Caco-2 (cell line): ENCODE measurements at regions of chr4 and their contacts with region 1.

Region 1: DNA sequence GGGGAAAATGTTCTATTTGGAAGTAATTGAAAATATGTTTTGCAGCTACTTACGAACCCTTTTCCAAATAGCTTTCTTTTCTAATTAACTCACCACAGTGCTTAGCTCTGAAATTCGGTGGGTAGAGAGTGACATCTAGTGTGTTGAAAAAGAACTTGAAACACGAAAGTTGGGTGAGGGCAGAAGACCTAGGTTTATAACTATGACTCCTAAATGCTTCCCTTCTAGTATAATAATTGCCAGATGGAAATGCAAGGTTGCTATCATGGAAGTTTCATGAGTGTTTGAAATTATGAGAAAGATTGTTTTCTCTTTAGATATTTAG is 77.3 kb upstream of the NOCT start:
- DNase-seq: peak in 1 of 2 experiments; percentile 44
- H3K4me3 ChIP-seq: no peak overlapping the region
- H3K4me3 Mint-ChIP-seq: no peak overlapping the region
- H3K27ac Mint-ChIP-seq: peak overlapping the region; percentile 32
- H3K4me1 ChIP-seq: peaks cover 56% of the 10 kb centered on the region
- H3K4me1 Mint-ChIP-seq: peaks cover 37% of the 10 kb centered on the region
- H3K27me3 ChIP-seq: no peaks in the 10 kb centered on the region
- H3K27me3 Mint-ChIP-seq: no peaks in the 10 kb centered on the region
- CTCF ChIP-seq: peak in 1 of 2 experiments; percentile 50

Region 2: GRCh38 chr4:137819964-137820383 is 1118.4 kb before region 1 on chr4:
- CTCF ChIA-PET with region 1: interaction called, 5 read pairs
- POLR2A ChIA-PET with region 1: no interaction called
- intact Hi-C with region 1: loop called (anchors 10 kb)
- DNase-seq: peak; percentile 46 to 58
- H3K4me3 ChIP-seq: no peak overlapping the region
- H3K4me3 Mint-ChIP-seq: no peak overlapping the region
- H3K27ac Mint-ChIP-seq: no peak overlapping the region
- H3K4me1 ChIP-seq: no peaks in the 10 kb centered on the region
- H3K4me1 Mint-ChIP-seq: no peaks in the 10 kb centered on the region
- H3K27me3 ChIP-seq: no peaks in the 10 kb centered on the region
- H3K27me3 Mint-ChIP-seq: no peaks in the 10 kb centered on the region
- CTCF ChIP-seq: peak; percentile 64 to 76

Region 3: DNA sequence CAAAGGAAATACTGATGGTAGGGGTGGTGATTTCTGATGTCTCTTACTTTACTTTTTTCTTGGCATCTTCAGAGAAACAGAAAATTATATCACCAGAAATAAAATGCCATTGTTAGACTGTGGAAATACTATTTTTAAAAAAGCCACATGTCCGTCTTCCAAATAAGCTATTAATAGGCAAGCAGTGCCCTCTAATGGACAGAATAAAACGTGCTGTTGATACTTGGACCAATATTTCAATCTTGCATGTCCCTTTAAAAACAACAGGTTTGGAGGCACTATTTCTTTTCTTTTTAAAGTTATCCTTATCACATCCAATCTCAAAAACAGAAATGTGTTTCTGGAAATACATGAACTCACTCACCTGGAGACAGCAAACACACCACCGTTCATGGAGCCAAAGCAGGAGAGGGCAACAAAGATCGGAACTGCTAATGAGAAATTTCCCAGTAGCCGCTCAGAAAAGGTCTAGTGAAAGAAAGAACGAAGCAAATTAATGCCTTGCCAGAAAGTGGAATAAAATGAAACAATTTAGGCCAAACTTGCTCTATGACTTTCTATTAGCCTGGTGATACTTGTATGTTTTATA is 755.4 kb before region 1 on chr4:
- CTCF ChIA-PET with region 1: interaction called, 3 read pairs
- POLR2A ChIA-PET with region 1: no interaction called
- intact Hi-C with region 1: loop called (anchors 5 kb)
- DNase-seq: peak in 1 of 2 experiments; percentile 45
- H3K4me3 ChIP-seq: no peak overlapping the region
- H3K4me3 Mint-ChIP-seq: no peak overlapping the region
- H3K27ac Mint-ChIP-seq: no peak overlapping the region
- H3K4me1 ChIP-seq: no peaks in the 10 kb centered on the region
- H3K4me1 Mint-ChIP-seq: no peaks in the 10 kb centered on the region
- H3K27me3 ChIP-seq: no peaks in the 10 kb centered on the region
- H3K27me3 Mint-ChIP-seq: no peaks in the 10 kb centered on the region
- CTCF ChIP-seq: peak; percentile 50 to 60

Region 4: GRCh38 chr4:138576684-138577083 is 361.6 kb before region 1 on chr4:
- CTCF ChIA-PET with region 1: interaction called, 29 read pairs
- POLR2A ChIA-PET with region 1: no interaction called
- intact Hi-C with region 1: loop called (anchors 1 kb)
- DNase-seq: peak in 1 of 2 experiments; percentile 33
- H3K4me3 ChIP-seq: no peak overlapping the region
- H3K4me3 Mint-ChIP-seq: no peak overlapping the region
- H3K27ac Mint-ChIP-seq: no peak overlapping the region
- H3K4me1 ChIP-seq: no peaks in the 10 kb centered on the region
- H3K4me1 Mint-ChIP-seq: no peaks in the 10 kb centered on the region
- H3K27me3 ChIP-seq: no peaks in the 10 kb centered on the region
- H3K27me3 Mint-ChIP-seq: no peaks in the 10 kb centered on the region
- CTCF ChIP-seq: peak; percentile 47 to 63

Region 5: GRCh38 chr4:138870737-138871554 is 67.4 kb before region 1 on chr4:
- CTCF ChIA-PET with region 1: interaction called, 39 read pairs
- POLR2A ChIA-PET with region 1: no interaction called
- intact Hi-C with region 1: loop called (anchors 1 kb)
- DNase-seq: peak; percentile 62 to 78
- H3K4me3 ChIP-seq: no peak overlapping the region
- H3K4me3 Mint-ChIP-seq: no peak overlapping the region
- H3K27ac Mint-ChIP-seq: no peak overlapping the region
- H3K4me1 ChIP-seq: peaks cover 11% of the 10 kb centered on the region
- H3K4me1 Mint-ChIP-seq: peaks cover 7% of the 10 kb centered on the region
- H3K27me3 ChIP-seq: no peaks in the 10 kb centered on the region
- H3K27me3 Mint-ChIP-seq: no peaks in the 10 kb centered on the region
- CTCF ChIP-seq: peak; percentile 70 to 80

Region 6: DNA sequence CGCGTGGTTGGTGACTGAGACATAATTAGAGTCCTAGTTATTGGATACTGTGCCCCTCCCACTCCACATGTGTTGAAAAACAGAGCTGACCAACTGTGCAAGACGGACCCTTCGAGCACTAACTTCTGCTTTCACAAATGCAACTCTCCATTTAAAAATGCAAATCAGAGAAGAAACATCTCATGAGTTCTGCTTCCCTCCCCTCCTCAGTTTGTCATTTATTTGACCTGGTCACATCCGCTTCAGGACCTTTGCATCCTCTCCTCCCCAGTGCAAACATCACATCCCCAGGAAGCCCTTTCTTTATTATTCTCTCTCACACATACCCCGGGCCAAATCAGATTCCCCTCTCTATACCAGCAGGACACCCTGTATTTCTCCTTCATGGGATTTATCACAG is 39.2 kb after region 1 on chr4:
- CTCF ChIA-PET with region 1: interaction called, 5 read pairs
- POLR2A ChIA-PET with region 1: no interaction called
- intact Hi-C with region 1: loop called (anchors 2 kb)
- DNase-seq: no peak
- H3K4me3 ChIP-seq: no peak overlapping the region
- H3K4me3 Mint-ChIP-seq: peak overlapping the region; percentile 25
- H3K27ac Mint-ChIP-seq: peak overlapping the region; percentile 78
- H3K4me1 ChIP-seq: peaks cover 55% of the 10 kb centered on the region
- H3K4me1 Mint-ChIP-seq: peaks cover 27% of the 10 kb centered on the region
- H3K27me3 ChIP-seq: no peaks in the 10 kb centered on the region
- H3K27me3 Mint-ChIP-seq: no peaks in the 10 kb centered on the region
- CTCF ChIP-seq: no peak

Region 7: DNA sequence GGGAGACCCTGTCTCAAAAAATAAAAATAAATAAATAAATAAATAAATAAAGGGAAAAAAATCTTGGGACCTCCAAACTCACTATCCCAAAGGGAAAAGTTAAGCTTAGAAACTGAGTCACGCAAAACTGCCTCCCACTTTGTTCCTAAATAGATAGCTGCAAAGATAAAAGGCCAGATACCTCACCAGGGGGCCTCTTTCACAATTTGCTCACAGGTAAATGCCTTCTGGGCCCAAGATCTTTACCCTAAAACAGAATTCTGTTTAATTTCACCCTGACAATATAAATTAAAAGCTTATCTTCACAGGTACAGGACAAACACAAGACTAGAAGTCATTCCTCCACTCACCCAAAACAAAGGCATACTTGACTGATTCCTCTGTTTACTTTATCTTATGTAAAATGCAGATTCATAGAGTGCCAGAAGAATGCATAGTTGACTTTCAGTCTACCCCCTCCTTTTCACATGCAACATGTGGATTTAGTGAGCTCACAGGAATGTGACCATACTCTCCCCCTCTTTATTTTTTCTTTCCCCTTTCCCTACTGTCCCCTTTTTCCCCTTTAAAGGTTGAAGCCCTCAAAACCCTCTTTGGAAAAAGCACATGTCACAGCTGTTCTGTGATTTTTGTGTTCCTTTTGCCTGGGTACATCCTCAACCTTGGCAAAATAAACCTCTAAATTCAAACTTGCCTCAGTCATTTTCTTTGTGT is 215.2 kb after region 1 on chr4:
- CTCF ChIA-PET with region 1: no interaction called
- POLR2A ChIA-PET with region 1: no interaction called
- intact Hi-C with region 1: loop called (anchors 1 kb)
- DNase-seq: peak in 1 of 2 experiments; percentile 60
- H3K4me3 ChIP-seq: no peak overlapping the region
- H3K4me3 Mint-ChIP-seq: peak overlapping the region; percentile 32
- H3K27ac Mint-ChIP-seq: peak overlapping the region; percentile 90
- H3K4me1 ChIP-seq: peaks cover 60% of the 10 kb centered on the region
- H3K4me1 Mint-ChIP-seq: peaks cover 39% of the 10 kb centered on the region
- H3K27me3 ChIP-seq: no peaks in the 10 kb centered on the region
- H3K27me3 Mint-ChIP-seq: no peaks in the 10 kb centered on the region
- CTCF ChIP-seq: no peak